Activated CD4-positive, alpha-beta memory T cell treated with anti-CD3 and anti-CD28 coated beads for 36 hours (primary cell): ENCODE measurements at regions of chr17 and their contacts with region 1.

Region 1: GRCh38 chr17:75109407-75110233 is at the start of gene ARMC7:
- DNase-seq: peak; percentile 96
- H3K4me3 Mint-ChIP-seq: peak within 1 kb of the TSS; percentile 90
- H3K27ac Mint-ChIP-seq: peak within 1 kb of the TSS; percentile 85
- H3K4me1 Mint-ChIP-seq: peaks cover 29% of the 10 kb centered on the region
- H3K27me3 Mint-ChIP-seq: no peaks in the 10 kb centered on the region
- total RNA-seq, gene ARMC7: 6.5 to 8.2 TPM

Region 2: GRCh38 chr17:75012346-75013091 is 97.1 kb before region 1 on chr17 and contains the start of gene MRPL58:
- CTCF ChIA-PET with region 1: interaction called, 10 read pairs
- POLR2A ChIA-PET with region 1: interaction called, 5 read pairs
- intact Hi-C with region 1: no loop called
- DNase-seq: peak; percentile 90
- H3K4me3 Mint-ChIP-seq: peak within 1 kb of the TSS; percentile 98
- H3K27ac Mint-ChIP-seq: peak within 1 kb of the TSS; percentile 82
- H3K4me1 Mint-ChIP-seq: peaks cover 31% of the 10 kb centered on the region
- H3K27me3 Mint-ChIP-seq: no peaks in the 10 kb centered on the region
- total RNA-seq, gene MRPL58: 57.7 TPM

Region 3: GRCh38 chr17:75077496-75078283 is 31.9 kb before region 1 on chr17:
- CTCF ChIA-PET with region 1: interaction called, 7 read pairs
- POLR2A ChIA-PET with region 1: no interaction called
- intact Hi-C with region 1: loop called (anchors 5 kb)
- DNase-seq: peak; percentile 67
- H3K4me3 Mint-ChIP-seq: peak overlapping the region; percentile 59
- H3K27ac Mint-ChIP-seq: peak overlapping the region; percentile 28
- H3K4me1 Mint-ChIP-seq: peaks cover 25% of the 10 kb centered on the region
- H3K27me3 Mint-ChIP-seq: no peaks in the 10 kb centered on the region

Region 4: DNA sequence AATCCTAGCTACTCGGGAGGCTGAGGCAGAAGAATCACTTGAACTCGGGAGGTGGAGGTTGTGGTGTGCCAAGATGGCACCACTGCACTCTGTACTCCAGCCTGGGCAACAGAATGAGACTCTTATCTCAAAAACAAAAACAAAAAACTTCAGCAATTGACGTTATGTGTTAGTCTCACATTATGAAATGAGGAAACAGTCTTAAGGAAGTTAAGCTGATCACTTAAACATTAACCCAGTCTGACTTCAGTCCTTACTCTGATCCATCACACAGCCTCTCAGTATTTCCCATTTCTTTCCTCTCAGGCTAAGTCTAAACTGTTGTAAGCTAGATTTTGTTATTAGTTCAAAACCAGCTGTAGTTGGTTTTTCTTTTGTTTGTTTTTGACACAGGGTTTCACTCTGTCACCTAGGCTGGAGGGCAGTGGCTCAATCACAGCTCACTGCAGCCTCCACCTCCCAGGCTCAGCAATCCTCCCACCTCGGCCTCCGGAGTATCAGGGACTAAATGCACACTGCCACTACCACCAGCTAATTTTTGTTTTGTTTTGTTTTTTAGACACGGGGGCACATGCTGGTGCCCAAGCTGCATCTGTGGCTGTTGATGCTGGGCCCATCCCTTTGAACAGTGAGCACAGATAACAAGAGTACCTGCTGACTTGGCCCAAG is 38.4 kb after region 1 on chr17:
- CTCF ChIA-PET with region 1: interaction called, 20 read pairs
- POLR2A ChIA-PET with region 1: no interaction called
- intact Hi-C with region 1: no loop called
- DNase-seq: no peak
- H3K4me3 Mint-ChIP-seq: no peak overlapping the region
- H3K27ac Mint-ChIP-seq: no peak overlapping the region
- H3K4me1 Mint-ChIP-seq: peaks cover 27% of the 10 kb centered on the region
- H3K27me3 Mint-ChIP-seq: no peaks in the 10 kb centered on the region

Region 5: GRCh38 chr17:75191584-75191983 is 82.0 kb after region 1 on chr17:
- CTCF ChIA-PET with region 1: interaction called, 11 read pairs
- POLR2A ChIA-PET with region 1: no interaction called
- intact Hi-C with region 1: no loop called
- DNase-seq: no peak
- H3K4me3 Mint-ChIP-seq: no peak overlapping the region
- H3K27ac Mint-ChIP-seq: no peak overlapping the region
- H3K4me1 Mint-ChIP-seq: peaks cover 8% of the 10 kb centered on the region
- H3K27me3 Mint-ChIP-seq: no peaks in the 10 kb centered on the region

Region 6: DNA sequence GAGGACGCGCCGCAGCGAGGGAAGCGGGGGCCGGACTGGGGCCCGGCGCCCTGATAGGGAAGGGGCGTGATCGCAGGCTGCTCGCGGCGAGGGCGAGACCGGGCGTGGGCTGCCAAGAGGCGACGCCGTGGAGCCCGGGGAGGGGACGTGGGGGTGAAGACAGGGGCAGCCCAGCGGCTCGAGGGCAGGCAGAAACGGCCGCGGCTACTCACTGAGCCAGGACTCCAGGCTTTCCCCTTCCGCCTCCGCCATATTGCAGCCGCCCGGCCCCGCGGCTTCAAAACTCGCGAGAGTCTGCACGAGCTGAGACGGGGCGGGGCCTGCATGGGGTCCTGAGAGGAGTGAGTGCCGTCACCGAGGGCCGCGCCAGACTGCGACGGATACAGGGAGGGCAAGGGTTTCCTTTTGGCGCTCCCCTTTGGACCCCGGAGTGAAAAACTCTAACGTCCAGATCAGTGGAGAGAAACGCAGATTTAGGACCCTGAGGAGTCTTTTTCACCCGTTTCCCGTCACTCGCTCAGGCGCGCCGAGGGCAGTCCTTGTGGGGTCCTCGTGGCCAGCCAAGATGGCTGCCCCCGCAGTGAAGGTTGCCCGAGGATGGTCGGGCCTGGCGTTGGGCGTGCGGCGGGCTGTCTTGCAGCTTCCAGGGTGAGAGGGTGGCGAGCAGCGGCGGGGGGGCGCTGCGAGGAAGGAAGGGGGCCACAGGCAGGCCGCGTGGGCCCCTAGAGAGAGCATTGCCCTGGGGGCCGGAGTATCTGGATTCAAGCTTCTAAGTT is 151.9 kb after region 1 on chr17 and contains the starts of genes GGA3 and MRPS7:
- CTCF ChIA-PET with region 1: interaction called, 11 read pairs
- POLR2A ChIA-PET with region 1: interaction called, 5 read pairs
- intact Hi-C with region 1: loop called (anchors 5 kb)
- DNase-seq: peak; percentile 96
- H3K4me3 Mint-ChIP-seq: peak within 1 kb of the TSS; percentile 93
- H3K27ac Mint-ChIP-seq: peak within 1 kb of the TSS; percentile 96
- H3K4me1 Mint-ChIP-seq: peaks cover 49% of the 10 kb centered on the region
- H3K27me3 Mint-ChIP-seq: no peaks in the 10 kb centered on the region
- total RNA-seq, gene GGA3: 68.5 to 70.7 TPM
- total RNA-seq, gene MRPS7: 72.9 to 76.1 TPM